CD14-positive monocyte (primary cell): ENCODE measurements at regions of chr9 and their contacts with region 1.

Region 1: GRCh38 chr9:124285903-124286291 is 28.1 kb downstream of the NEK6 start:
- DNase-seq: peak; percentile 88 to 96 (median 94)
- H3K4me3 ChIP-seq: peak overlapping the region in 1 of 3 experiments; percentile 6
- H3K4me3 Mint-ChIP-seq: peak overlapping the region; percentile 54 to 86
- H3K27ac ChIP-seq: peak overlapping the region; percentile 88
- H3K27ac Mint-ChIP-seq: peak overlapping the region; percentile 91 to 100 (median 97)
- H3K4me1 ChIP-seq: peaks cover 79 to 87% of the 10 kb centered on the region in 2 donors
- H3K4me1 Mint-ChIP-seq: peaks cover 85% of the 10 kb centered on the region
- H3K27me3 ChIP-seq: no peaks in the 10 kb centered on the region
- H3K27me3 Mint-ChIP-seq: peaks cover 0 to 2% (median 0%) of the 10 kb centered on the region in 3 donors
- CTCF ChIP-seq: no peak

Region 2: DNA sequence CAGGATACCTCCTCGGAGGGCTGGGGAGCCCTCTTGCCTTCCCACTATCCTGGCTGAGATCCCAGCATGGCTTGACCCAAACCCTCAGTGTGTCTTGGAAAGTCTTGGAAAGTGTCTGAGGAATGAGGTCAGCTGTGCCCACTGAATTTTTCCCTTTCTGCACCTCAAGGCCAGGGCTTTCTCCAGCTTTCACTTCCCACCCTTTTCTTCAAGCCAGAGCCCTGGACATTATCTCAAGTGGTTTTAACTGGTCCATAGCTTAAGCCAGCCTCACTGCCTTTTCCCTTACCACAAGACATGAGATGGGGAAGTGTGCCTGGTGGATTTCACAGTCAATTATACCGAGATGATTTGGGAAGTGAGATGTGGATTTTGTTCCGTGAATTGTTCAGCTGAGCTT is 310.0 kb before region 1 on chr9:
- intact Hi-C with region 1: no loop called
- DNase-seq: no peak
- H3K4me3 ChIP-seq: no peak overlapping the region
- H3K4me3 Mint-ChIP-seq: no peak overlapping the region
- H3K27ac ChIP-seq: no peak overlapping the region
- H3K27ac Mint-ChIP-seq: no peak overlapping the region
- H3K4me1 ChIP-seq: no peaks in the 10 kb centered on the region
- H3K4me1 Mint-ChIP-seq: no peaks in the 10 kb centered on the region
- H3K27me3 ChIP-seq: peaks cover 4 to 11% of the 10 kb centered on the region in 2 donors
- H3K27me3 Mint-ChIP-seq: peaks cover 15 to 23% (median 19%) of the 10 kb centered on the region in 3 donors
- CTCF ChIP-seq: no peak

Region 3: GRCh38 chr9:124197177-124198095 is 88.5 kb before region 1 on chr9:
- intact Hi-C with region 1: loop called in 1 of 2 experiments (anchors 5 kb)
- DNase-seq: peak; percentile 92 to 97 (median 94)
- H3K4me3 ChIP-seq: peak overlapping the region in 2 of 3 experiments; percentile 23 to 50
- H3K4me3 Mint-ChIP-seq: peak overlapping the region; percentile 7 to 77
- H3K27ac ChIP-seq: peak overlapping the region; percentile 70 to 93
- H3K27ac Mint-ChIP-seq: peak overlapping the region; percentile 92 to 99 (median 96)
- H3K4me1 ChIP-seq: peaks cover 58 to 62% of the 10 kb centered on the region in 2 donors
- H3K4me1 Mint-ChIP-seq: peaks cover 73% of the 10 kb centered on the region
- H3K27me3 ChIP-seq: no peaks in the 10 kb centered on the region
- H3K27me3 Mint-ChIP-seq: peaks cover 0 to 4% (median 0%) of the 10 kb centered on the region in 3 donors
- CTCF ChIP-seq: peak; percentile 31

Region 4: GRCh38 chr9:124218438-124218982 is 67.4 kb before region 1 on chr9:
- intact Hi-C with region 1: no loop called
- DNase-seq: peak; percentile 95 to 98 (median 96)
- H3K4me3 ChIP-seq: peak overlapping the region in 1 of 3 experiments; percentile 27
- H3K4me3 Mint-ChIP-seq: peak overlapping the region; percentile 27 to 46
- H3K27ac ChIP-seq: peak overlapping the region; percentile 97
- H3K27ac Mint-ChIP-seq: peak overlapping the region; percentile 97 to 100 (median 99)
- H3K4me1 ChIP-seq: peaks cover 100% of the 10 kb centered on the region in 2 donors
- H3K4me1 Mint-ChIP-seq: peaks cover 98% of the 10 kb centered on the region
- H3K27me3 ChIP-seq: no peaks in the 10 kb centered on the region
- H3K27me3 Mint-ChIP-seq: no peaks in the 10 kb centered on the region
- CTCF ChIP-seq: no peak

Region 5: DNA sequence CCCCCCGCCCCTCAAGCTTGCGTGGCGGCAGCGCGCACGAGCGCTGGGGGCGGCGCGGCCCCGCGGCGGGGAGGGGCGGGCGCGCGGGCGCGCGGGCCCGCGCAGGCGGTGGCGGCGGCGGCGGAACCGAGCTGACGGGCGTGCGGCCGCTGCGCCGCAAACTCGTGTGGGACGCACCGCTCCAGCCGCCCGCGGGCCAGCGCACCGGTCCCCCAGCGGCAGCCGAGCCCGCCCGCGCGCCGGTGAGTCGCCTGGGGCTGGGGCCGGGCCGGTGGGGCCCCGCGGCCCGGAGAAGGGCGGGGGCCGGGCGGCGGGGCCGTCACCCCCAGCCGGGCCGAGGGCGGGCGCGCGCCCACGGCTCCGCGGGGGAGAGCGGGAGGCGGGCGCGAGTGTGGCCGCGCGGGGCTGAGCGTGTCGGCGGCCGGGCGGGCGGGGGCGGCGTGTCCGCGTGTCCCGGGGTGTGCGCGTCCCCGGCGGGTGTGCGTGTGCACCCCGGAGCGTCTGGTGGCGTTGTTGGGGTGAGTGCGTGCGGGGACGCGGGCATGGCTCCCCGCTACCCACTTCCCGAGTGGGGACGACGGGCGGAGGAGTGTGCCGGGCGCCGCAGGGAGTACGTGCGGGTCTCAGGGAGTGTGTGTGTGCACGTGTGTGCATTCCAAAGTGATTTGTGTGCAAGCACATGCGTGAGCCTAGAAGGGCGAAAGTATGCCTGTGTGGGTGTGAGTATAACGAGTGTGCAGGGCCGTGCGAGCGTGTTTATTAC is 27.9 kb before region 1 on chr9 and contains the start of gene NEK6:
- intact Hi-C with region 1: loop called in 1 of 2 experiments (anchors 2 kb)
- DNase-seq: peak in 2 of 3 donors; percentile 32 to 52
- H3K4me3 ChIP-seq: peak within 1 kb of the TSS; percentile 81 to 98 (median 91)
- H3K4me3 Mint-ChIP-seq: peak within 1 kb of the TSS; percentile 96 to 99
- H3K27ac ChIP-seq: peak within 1 kb of the TSS; percentile 76 to 93
- H3K27ac Mint-ChIP-seq: peak within 1 kb of the TSS; percentile 92 to 97 (median 95)
- H3K4me1 ChIP-seq: peaks cover 52 to 65% of the 10 kb centered on the region in 2 donors
- H3K4me1 Mint-ChIP-seq: peaks cover 70% of the 10 kb centered on the region
- H3K27me3 ChIP-seq: no peaks in the 10 kb centered on the region
- H3K27me3 Mint-ChIP-seq: peaks cover 2 to 5% (median 3%) of the 10 kb centered on the region in 3 donors
- CTCF ChIP-seq: no peak
- polyA plus RNA-seq, gene NEK6: 26.1 to 46.0 (median 35.8) TPM

Region 6: GRCh38 chr9:124309665-124310064 is 23.8 kb after region 1 on chr9:
- intact Hi-C with region 1: loop called in 1 of 2 experiments (anchors 2 kb)
- DNase-seq: no peak
- H3K4me3 ChIP-seq: no peak overlapping the region
- H3K4me3 Mint-ChIP-seq: no peak overlapping the region
- H3K27ac ChIP-seq: peak overlapping the region in 1 of 2 donors; percentile 11
- H3K27ac Mint-ChIP-seq: peak overlapping the region in 1 of 7 donors; percentile 42
- H3K4me1 ChIP-seq: peaks cover 14 to 17% of the 10 kb centered on the region in 2 donors
- H3K4me1 Mint-ChIP-seq: peaks cover 22% of the 10 kb centered on the region
- H3K27me3 ChIP-seq: no peaks in the 10 kb centered on the region
- H3K27me3 Mint-ChIP-seq: no peaks in the 10 kb centered on the region
- CTCF ChIP-seq: no peak

Region 7: DNA sequence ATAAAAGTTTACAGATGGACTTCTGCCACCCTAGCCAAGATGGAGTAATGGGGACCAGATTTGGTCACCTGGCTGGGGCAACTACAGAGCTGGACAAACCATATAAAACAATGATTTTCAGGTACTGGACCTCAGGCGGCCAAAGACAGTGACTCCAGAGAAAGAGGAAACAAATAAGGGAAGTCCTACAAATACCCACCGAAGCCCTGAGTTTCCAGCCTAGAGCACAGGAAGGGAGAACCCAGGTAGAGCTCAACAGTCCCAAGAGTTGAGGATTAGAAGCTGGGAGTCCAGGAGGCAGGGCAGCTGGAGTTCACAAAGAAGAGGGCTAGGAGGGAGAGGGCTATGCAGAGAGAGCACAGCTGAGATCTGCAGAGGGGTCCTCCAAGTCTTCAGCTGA is 328.0 kb after region 1 on chr9:
- intact Hi-C with region 1: no loop called
- DNase-seq: peak; percentile 13 to 41 (median 35)
- H3K4me3 ChIP-seq: no peak overlapping the region
- H3K4me3 Mint-ChIP-seq: no peak overlapping the region
- H3K27ac ChIP-seq: no peak overlapping the region
- H3K27ac Mint-ChIP-seq: peak overlapping the region in 1 of 7 donors; percentile 40
- H3K4me1 ChIP-seq: no peaks in the 10 kb centered on the region
- H3K4me1 Mint-ChIP-seq: peaks cover 4% of the 10 kb centered on the region
- H3K27me3 ChIP-seq: no peaks in the 10 kb centered on the region
- H3K27me3 Mint-ChIP-seq: no peaks in the 10 kb centered on the region
- CTCF ChIP-seq: no peak